Transverse colon (tissue), 4 donors: ENCODE measurements at regions of chr18 and their contacts with region 1.

Region 1: GRCh38 chr18:49169037-49169521 is 218.3 kb upstream of the SMAD7 start:
- DNase-seq: peak; percentile 31
- H3K4me3 ChIP-seq: no peak overlapping the region
- H3K27ac ChIP-seq: no peak overlapping the region
- H3K4me1 ChIP-seq: peaks cover 0 to 8% (median 3%) of the 10 kb centered on the region in 4 donors
- H3K27me3 ChIP-seq: no peaks in the 10 kb centered on the region
- CTCF ChIP-seq: no peak
- EP300 ChIP-seq: no peak
- POLR2A ChIP-seq: no peak

Region 2: GRCh38 chr18:49048396-49049020 is 120.6 kb before region 1 on chr18:
- in situ Hi-C with region 1: no loop called
- intact Hi-C with region 1: loop called (anchors 5 kb)
- DNase-seq: no peak
- H3K4me3 ChIP-seq: no peak overlapping the region
- H3K27ac ChIP-seq: no peak overlapping the region
- H3K4me1 ChIP-seq: peaks cover 0 to 30% (median 16%) of the 10 kb centered on the region in 4 donors
- H3K27me3 ChIP-seq: no peaks in the 10 kb centered on the region
- CTCF ChIP-seq: no peak
- EP300 ChIP-seq: no peak
- POLR2A ChIP-seq: no peak

Region 3: GRCh38 chr18:50143295-50143694 is 974.2 kb after region 1 on chr18:
- in situ Hi-C with region 1: no loop called
- intact Hi-C with region 1: no loop called
- DNase-seq: no peak
- H3K4me3 ChIP-seq: no peak overlapping the region
- H3K27ac ChIP-seq: no peak overlapping the region
- H3K4me1 ChIP-seq: peaks cover 0 to 20% (median 5%) of the 10 kb centered on the region in 4 donors
- H3K27me3 ChIP-seq: no peaks in the 10 kb centered on the region
- CTCF ChIP-seq: no peak
- EP300 ChIP-seq: no peak
- POLR2A ChIP-seq: no peak

Region 4: GRCh38 chr18:50820901-50821520 is 1651.9 kb after region 1 on chr18:
- in situ Hi-C with region 1: no loop called
- intact Hi-C with region 1: no loop called
- DNase-seq: no peak
- H3K4me3 ChIP-seq: no peak overlapping the region
- H3K27ac ChIP-seq: peak overlapping the region in 2 of 4 donors; percentile 9 to 34
- H3K4me1 ChIP-seq: peaks cover 8 to 34% (median 25%) of the 10 kb centered on the region in 4 donors
- H3K27me3 ChIP-seq: no peaks in the 10 kb centered on the region
- CTCF ChIP-seq: no peak
- EP300 ChIP-seq: no peak
- POLR2A ChIP-seq: no peak